Mammary epithelial cell (primary cell): ENCODE measurements at regions of chr13 and their contacts with region 1.

Region 1: DNA sequence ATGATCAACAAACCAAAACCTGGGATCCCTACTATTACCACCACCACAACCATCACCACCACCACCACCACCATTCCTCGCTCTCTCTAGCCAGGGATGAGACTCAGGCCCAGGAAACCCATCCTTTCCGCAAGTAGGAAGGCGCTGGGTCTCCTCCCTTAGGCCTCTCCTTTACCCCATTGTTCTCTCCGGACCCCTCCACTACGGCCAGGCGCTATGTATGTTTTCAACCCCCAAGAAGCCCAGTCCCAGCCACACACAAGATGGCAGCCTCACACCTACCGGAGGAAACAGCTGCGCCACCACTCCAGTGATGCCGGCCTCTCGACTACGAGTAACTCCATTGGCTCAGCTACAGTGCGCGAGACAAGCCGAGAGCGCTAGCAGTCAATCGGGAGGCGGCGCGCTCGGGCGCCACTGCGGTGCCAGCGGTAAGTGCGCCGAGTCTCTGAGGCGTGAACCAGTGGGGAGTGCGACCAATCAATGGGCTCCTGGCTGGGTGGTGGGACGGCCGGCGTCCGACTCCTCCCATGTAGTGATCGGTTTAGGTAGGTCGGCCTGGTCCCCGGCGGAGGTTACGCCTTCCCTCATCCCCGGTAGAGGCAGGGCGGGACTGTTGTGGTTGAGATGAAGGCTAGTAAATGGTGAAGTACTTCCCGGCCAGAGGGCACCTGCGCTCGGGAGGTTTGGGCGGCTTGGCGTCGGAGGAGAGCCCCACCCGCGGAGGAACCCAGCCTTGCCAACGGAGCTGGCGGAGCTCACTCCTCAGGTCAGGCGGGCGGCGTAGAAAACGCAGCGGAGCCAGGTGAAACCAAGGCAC is at the starts of genes CAB39L and SETDB2:
- DNase-seq: peak; percentile 100
- H3K4me3 ChIP-seq: peak within 1 kb of the TSS; percentile 69 to 95 (median 70)
- H3K27ac ChIP-seq: peak within 1 kb of the TSS; percentile 72
- H3K4me1 ChIP-seq: peaks cover 2% of the 10 kb centered on the region
- H3K27me3 ChIP-seq: no peaks in the 10 kb centered on the region
- CTCF ChIP-seq: peak; percentile 22 to 55
- total RNA-seq, gene CAB39L: 5.7 to 8.0 TPM
- total RNA-seq, gene SETDB2: 8.1 to 10.2 TPM

Region 2: GRCh38 chr13:49348751-49349150 is 95.2 kb before region 1 on chr13:
- CTCF ChIA-PET with region 1: no interaction called
- dilution Hi-C with region 1: no loop called
- in situ Hi-C with region 1: no loop called
- intact Hi-C with region 1: no loop called
- DNase-seq: no peak
- H3K4me3 ChIP-seq: no peak overlapping the region
- H3K27ac ChIP-seq: no peak overlapping the region
- H3K4me1 ChIP-seq: no peaks in the 10 kb centered on the region
- H3K27me3 ChIP-seq: no peaks in the 10 kb centered on the region
- CTCF ChIP-seq: no peak

Region 3: GRCh38 chr13:49495783-49496762 is 52.2 kb after region 1 on chr13 and contains the start of gene PHF11:
- CTCF ChIA-PET with region 1: no interaction called
- dilution Hi-C with region 1: no loop called
- in situ Hi-C with region 1: no loop called
- intact Hi-C with region 1: loop called (anchors 1 kb)
- DNase-seq: peak; percentile 79
- H3K4me3 ChIP-seq: peak within 1 kb of the TSS; percentile 57 to 76 (median 57)
- H3K27ac ChIP-seq: peak within 1 kb of the TSS; percentile 66
- H3K4me1 ChIP-seq: peaks cover 27% of the 10 kb centered on the region
- H3K27me3 ChIP-seq: no peaks in the 10 kb centered on the region
- CTCF ChIP-seq: peak in 1 of 2 donors; percentile 12
- total RNA-seq, gene PHF11: 7.7 to 25.5 TPM